ENCODE measurements at regions of chr17 and their contacts with region 1.

Region 1: GRCh38 chr17:19753049-19753444 is 4.9 kb upstream of the ALDH3A1 start:
- DNase-seq: peak; percentile 99
- ATAC-seq: peak; percentile 88
- H3K4me3 ChIP-seq: peak overlapping the region; percentile 6; the same call in 1 of the 2 replicates
- H3K27ac ChIP-seq: peak overlapping the region; percentile 97
- H3K4me1 ChIP-seq: peaks cover 50% of the 10 kb centered on the region
- H3K27me3 ChIP-seq: no peaks in the 10 kb centered on the region
- CTCF ChIP-seq: no peak

Region 2: GRCh38 chr17:19538095-19539039 is 214.7 kb before region 1 on chr17:
- CTCF ChIA-PET with region 1: no interaction called
- POLR2A ChIA-PET with region 1: no interaction called
- intact Hi-C with region 1: no loop called
- DNase-seq: no peak
- ATAC-seq: no peak
- H3K4me3 ChIP-seq: no peak overlapping the region
- H3K27ac ChIP-seq: no peak overlapping the region
- H3K4me1 ChIP-seq: no peaks in the 10 kb centered on the region
- H3K27me3 ChIP-seq: peaks cover 15% of the 10 kb centered on the region
- CTCF ChIP-seq: no peak

Region 3: DNA sequence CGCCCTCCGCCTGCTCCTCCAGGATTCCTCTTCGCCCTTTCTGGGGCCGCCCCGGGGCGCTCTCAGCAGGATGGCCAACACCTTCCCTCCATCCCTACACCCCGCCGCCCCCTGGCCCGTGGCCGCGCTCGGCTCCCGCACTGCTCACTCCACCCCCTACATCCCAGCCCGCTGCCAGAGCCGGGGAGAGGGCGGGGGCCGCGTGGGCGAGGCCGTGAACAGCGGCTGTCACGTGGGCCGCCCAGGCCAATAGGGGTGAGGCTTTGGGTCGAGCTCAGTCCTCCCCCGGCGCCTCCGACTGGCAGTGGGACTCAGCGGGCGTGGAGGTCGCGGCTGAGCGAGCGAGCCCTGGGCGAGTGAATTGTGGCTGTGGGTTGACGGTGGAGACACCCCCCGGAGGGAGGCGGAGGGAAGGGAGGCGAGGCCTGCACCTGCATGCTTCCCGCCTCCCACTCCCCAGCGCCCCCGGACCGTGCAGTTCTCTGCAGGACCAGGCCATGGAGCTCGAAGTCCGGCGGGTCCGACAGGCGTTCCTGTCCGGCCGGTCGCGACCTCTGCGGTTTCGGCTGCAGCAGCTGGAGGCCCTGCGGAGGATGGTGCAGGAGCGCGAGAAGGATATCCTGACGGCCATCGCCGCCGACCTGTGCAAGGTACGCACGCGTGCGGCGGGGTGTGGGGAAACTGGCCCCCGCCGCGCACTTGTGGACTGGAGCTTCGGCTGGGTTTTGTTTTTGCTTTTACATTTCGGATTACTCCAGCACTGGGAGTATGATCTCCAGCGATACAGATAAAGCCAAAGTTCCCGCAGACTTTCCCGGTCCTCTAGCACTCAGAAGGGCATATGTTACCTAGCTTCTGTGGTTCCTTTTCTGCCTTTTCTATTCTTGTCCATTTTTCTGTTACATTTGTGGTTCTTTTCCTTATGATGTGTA is 104.3 kb before region 1 on chr17 and contains the start of gene ALDH3A2:
- CTCF ChIA-PET with region 1: interaction called, 3 read pairs
- POLR2A ChIA-PET with region 1: interaction called, 6 read pairs
- intact Hi-C with region 1: loop called (anchors 1 kb)
- DNase-seq: peak; percentile 97
- ATAC-seq: peak; percentile 85
- H3K4me3 ChIP-seq: peak within 1 kb of the TSS; percentile 90
- H3K27ac ChIP-seq: peak within 1 kb of the TSS; percentile 76
- H3K4me1 ChIP-seq: peaks cover 64% of the 10 kb centered on the region
- H3K27me3 ChIP-seq: no peaks in the 10 kb centered on the region
- CTCF ChIP-seq: 0 out of 2 replicates have a peak, but pooled peaks have one; percentile 29
- total RNA-seq, gene ALDH3A2: 125 and 143 TPM in 2 replicates

Region 4: DNA sequence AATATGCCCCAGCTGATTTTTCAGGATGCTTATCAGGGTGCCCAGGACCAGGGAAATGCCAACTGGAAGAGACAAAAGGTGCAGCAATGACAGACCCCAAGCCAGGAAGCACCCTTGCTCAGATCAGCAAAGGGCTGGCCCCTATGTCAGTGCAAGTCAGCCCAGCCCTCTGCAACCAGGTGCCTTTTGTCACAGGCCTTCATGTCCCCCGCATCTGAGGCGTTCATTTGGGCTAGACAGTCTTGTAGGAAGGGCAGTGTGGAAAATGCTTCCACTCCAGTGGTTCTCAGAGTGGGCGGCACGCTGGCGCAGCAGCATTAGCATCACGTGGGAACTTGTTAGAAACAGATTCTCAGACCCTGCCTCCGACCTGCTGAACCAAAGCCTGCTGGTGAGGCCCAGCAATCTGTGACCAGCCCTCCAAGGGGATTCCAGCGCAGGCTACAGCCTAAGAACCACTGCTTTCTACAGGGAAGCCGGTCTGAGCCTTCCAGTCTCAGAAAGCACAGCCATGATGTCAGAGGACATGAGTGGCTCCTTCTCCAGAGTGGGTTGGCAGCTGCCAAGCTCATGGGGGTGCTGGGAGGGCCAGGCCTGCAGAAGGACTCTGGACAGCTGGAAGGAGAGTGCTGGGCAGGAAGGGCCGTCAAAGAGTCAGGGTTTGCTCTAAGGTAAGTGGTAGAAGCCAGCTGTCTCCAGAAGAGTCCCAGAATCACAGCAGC is 49.8 kb before region 1 on chr17:
- CTCF ChIA-PET with region 1: no interaction called
- POLR2A ChIA-PET with region 1: interaction called, 29 read pairs
- intact Hi-C with region 1: no loop called
- DNase-seq: no peak
- ATAC-seq: no peak
- H3K4me3 ChIP-seq: no peak overlapping the region
- H3K27ac ChIP-seq: no peak overlapping the region
- H3K4me1 ChIP-seq: no peaks in the 10 kb centered on the region
- H3K27me3 ChIP-seq: no peaks in the 10 kb centered on the region
- CTCF ChIP-seq: no peak

Region 5: DNA sequence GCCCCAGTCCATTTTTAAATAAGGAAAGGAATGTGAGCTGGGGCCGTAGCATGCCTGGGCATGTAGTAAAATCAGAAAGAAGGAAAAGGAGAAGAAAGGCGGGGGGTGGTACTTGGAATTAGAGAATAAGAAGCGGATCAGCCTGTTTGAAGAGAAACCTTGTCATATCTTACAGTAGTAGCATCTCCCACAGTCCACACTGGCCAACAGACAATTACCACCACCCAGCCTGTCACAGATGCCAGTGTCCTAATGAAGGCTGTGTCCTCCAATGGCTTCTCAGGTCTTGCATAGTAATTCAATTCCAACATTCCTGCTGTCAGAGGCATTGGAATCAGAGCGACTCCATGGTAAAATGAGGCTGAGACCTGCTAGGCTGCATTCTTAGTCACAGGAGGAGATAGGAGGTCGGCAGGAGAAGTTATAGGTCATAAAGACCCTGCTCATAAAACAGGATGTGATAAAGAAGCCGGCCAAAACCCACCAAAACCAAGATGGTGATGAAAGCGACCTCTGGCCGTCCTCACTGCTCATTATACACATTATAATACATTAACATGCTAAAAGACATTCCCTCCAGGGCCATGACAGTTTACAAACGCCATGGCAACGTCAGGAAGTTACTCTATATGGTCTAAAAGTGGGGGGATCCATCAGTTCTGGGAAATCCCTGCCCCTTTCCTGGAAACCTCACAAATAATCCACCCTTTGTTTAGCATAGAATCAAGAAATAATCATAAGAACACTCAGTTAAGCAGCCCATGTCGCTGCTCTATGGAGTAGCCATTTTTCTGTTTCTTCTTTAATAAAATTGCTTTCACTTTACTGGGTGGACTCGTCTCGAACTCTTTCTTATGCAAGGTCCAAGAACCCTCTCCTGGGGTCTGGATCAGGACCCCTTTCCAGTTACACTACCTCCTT is 234.2 kb after region 1 on chr17:
- CTCF ChIA-PET with region 1: no interaction called
- POLR2A ChIA-PET with region 1: no interaction called
- intact Hi-C with region 1: no loop called
- DNase-seq: no peak
- ATAC-seq: no peak
- H3K4me3 ChIP-seq: no peak overlapping the region
- H3K27ac ChIP-seq: no peak overlapping the region
- H3K4me1 ChIP-seq: no peaks in the 10 kb centered on the region; the same call in 1 of the 2 replicates
- H3K27me3 ChIP-seq: no peaks in the 10 kb centered on the region
- CTCF ChIP-seq: no peak

Measured in PC-3 (cell line).